Activated CD8-positive, alpha-beta T cell treated with anti-CD3 and anti-CD28 coated beads, Interleukin-2, amount 10 ng/mL, durations not matched to agents 7 days and 5 days (primary cell): ENCODE measurements at regions of chr11 and their contacts with region 1.

Region 1: DNA sequence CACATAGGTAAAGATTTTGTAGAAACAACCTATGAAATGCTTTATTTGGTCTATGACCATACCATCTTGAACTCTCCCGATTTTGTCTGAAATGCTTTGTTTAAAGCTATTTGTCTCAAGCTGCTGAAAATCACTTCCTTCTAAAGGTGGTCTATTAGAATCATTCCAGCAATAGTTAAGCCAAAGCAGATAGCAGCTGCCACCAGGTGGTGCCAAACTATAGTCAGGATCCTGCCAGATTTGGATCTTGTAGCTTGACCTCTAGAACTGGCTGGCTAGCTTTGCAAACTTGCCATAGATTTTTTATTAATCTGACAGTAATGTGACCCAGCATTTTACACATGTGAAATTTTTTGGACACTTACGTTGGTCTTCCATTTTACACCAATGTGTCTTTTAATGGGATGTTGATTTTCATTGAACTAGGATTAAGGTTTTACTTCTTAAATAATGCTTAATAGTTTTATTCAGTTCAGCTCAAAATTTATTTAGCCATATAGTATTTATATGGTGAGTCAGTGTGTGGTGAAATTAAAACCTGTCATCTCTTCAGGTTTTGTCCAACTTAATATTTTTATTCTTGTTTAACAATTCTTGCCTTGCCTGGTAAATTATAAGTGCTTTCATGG is 19.7 kb downstream of the CTR9 start:
- DNase-seq: peak; percentile 54
- ATAC-seq: peak; percentile 53
- H3K4me3 Mint-ChIP-seq: no peak overlapping the region
- H3K27ac Mint-ChIP-seq: no peak overlapping the region
- H3K4me1 Mint-ChIP-seq: no peaks in the 10 kb centered on the region
- H3K27me3 Mint-ChIP-seq: no peaks in the 10 kb centered on the region

Region 2: GRCh38 chr11:10750838-10751580 is 19.7 kb before region 1 on chr11 and contains the start of gene CTR9:
- CTCF ChIA-PET with region 1: interaction called, 17 read pairs
- POLR2A ChIA-PET with region 1: no interaction called
- DNase-seq: peak; percentile 94
- ATAC-seq: peak; percentile 90
- H3K4me3 Mint-ChIP-seq: peak within 1 kb of the TSS; percentile 95
- H3K27ac Mint-ChIP-seq: peak within 1 kb of the TSS; percentile 89
- H3K4me1 Mint-ChIP-seq: peaks cover 31% of the 10 kb centered on the region
- H3K27me3 Mint-ChIP-seq: no peaks in the 10 kb centered on the region
- total RNA-seq, gene CTR9: 43.4 to 44.0 TPM

Region 3: DNA sequence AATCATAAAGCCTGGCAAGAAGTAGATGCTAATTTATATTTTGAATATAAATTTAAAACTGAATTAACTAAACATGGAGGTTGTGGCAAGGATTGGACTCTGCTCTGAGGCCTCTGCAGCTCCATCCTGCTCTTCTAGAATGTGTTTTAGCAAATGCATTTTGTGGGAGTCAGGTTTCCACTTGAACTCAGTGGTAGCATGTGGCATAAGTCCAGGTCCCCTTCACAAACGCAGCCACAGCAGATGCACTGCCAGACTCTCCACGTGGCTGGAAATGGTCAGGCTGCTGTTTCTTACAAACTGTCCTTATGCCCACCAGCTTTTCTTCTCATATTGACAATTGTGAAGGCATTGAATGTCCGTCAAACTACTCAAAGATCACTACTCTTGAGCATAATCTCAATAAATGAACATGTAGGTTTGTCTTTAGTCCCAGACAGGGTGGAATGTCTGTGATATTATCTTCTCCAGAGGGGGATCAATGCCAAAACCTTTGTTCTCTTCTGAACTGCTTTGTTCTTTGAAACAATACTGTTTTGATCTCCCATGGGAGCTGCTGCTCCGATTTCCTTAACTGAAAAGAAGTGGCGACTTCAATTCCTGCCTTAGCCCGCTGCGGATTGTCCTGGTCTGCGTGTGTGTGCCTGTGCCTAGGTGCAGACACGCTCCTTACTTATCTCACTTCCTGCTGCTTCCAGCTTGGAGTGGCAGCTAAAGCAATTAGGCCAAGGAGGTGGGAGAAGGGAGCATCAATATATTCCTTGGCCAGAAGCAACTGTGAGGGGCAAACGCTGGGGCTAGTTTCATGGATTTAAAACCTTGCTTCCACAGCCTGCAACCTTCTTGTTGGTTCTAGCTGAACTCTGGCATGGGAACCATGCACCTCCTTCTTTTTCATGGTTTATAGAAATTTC is 13.7 kb after region 1 on chr11:
- CTCF ChIA-PET with region 1: interaction called, 78 read pairs
- POLR2A ChIA-PET with region 1: no interaction called
- DNase-seq: no peak
- ATAC-seq: no peak
- H3K4me3 Mint-ChIP-seq: no peak overlapping the region
- H3K27ac Mint-ChIP-seq: no peak overlapping the region
- H3K4me1 Mint-ChIP-seq: no peaks in the 10 kb centered on the region
- H3K27me3 Mint-ChIP-seq: no peaks in the 10 kb centered on the region

Region 4: DNA sequence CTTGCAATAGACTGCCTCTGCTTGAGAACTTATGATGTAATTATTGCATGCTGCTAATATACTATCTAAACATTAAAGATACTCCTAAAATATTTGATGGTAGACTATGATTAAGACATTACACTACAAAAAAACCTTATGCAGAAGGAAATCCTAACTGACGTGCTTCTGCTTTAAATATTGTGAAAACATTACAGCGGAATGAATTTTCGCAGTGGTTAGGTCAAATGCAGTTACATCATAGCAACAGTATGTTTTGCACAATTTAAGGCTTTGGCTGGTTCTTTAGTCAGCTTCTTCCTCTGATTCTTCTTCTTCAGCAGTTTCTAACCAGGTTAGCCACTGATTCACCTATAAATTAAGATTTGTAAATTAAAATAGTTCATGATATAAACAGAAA is 26.8 kb after region 1 on chr11:
- CTCF ChIA-PET with region 1: interaction called, 78 read pairs
- POLR2A ChIA-PET with region 1: no interaction called
- DNase-seq: no peak
- ATAC-seq: no peak
- H3K4me3 Mint-ChIP-seq: no peak overlapping the region
- H3K27ac Mint-ChIP-seq: no peak overlapping the region
- H3K4me1 Mint-ChIP-seq: peaks cover 80% of the 10 kb centered on the region
- H3K27me3 Mint-ChIP-seq: peaks cover 5% of the 10 kb centered on the region

Region 5: GRCh38 chr11:10818594-10818993 is 47.9 kb after region 1 on chr11:
- CTCF ChIA-PET with region 1: interaction called, 10 read pairs
- POLR2A ChIA-PET with region 1: no interaction called
- DNase-seq: no peak
- ATAC-seq: no peak
- H3K4me3 Mint-ChIP-seq: no peak overlapping the region
- H3K27ac Mint-ChIP-seq: no peak overlapping the region
- H3K4me1 Mint-ChIP-seq: no peaks in the 10 kb centered on the region
- H3K27me3 Mint-ChIP-seq: peaks cover 5% of the 10 kb centered on the region

Region 6: GRCh38 chr11:10838083-10838482 is 67.3 kb after region 1 on chr11:
- CTCF ChIA-PET with region 1: no interaction called
- POLR2A ChIA-PET with region 1: no interaction called
- DNase-seq: no peak
- ATAC-seq: no peak
- H3K4me3 Mint-ChIP-seq: no peak overlapping the region
- H3K27ac Mint-ChIP-seq: no peak overlapping the region
- H3K4me1 Mint-ChIP-seq: no peaks in the 10 kb centered on the region
- H3K27me3 Mint-ChIP-seq: peaks cover 4% of the 10 kb centered on the region

Region 7: DNA sequence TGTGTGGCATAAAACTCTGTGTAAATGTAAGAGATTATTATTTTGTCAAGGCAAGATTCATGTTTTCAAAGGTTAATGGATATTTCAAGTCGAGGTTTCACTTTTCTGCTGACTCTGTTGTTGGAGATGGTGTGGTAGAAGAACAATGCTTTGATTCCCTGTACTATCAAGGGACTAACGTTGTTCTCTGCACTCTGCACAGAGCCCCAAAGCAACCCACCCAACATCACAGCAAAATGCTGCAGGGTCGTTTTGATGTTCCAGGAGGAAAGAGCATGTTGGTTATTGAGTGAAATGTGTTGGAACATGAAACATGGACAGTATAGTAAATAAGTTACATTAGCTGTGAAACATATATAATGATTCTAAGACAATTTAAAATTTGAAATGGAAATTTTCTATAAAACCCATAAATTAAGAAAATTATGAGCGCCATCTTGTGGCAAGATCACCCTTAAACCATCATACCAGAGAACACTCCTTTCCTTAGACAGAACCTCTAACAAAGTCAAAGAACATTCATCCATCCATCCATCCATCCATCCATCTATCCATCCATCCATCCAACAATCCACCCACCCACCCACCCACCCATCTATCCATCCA is 251.5 kb after region 1 on chr11:
- CTCF ChIA-PET with region 1: interaction called, 18 read pairs
- POLR2A ChIA-PET with region 1: no interaction called
- DNase-seq: peak; percentile 43
- ATAC-seq: no peak
- H3K4me3 Mint-ChIP-seq: no peak overlapping the region
- H3K27ac Mint-ChIP-seq: no peak overlapping the region
- H3K4me1 Mint-ChIP-seq: no peaks in the 10 kb centered on the region
- H3K27me3 Mint-ChIP-seq: peaks cover 18% of the 10 kb centered on the region